ENCODE measurements at regions of chrX and their contacts with region 1.

Region 1: DNA sequence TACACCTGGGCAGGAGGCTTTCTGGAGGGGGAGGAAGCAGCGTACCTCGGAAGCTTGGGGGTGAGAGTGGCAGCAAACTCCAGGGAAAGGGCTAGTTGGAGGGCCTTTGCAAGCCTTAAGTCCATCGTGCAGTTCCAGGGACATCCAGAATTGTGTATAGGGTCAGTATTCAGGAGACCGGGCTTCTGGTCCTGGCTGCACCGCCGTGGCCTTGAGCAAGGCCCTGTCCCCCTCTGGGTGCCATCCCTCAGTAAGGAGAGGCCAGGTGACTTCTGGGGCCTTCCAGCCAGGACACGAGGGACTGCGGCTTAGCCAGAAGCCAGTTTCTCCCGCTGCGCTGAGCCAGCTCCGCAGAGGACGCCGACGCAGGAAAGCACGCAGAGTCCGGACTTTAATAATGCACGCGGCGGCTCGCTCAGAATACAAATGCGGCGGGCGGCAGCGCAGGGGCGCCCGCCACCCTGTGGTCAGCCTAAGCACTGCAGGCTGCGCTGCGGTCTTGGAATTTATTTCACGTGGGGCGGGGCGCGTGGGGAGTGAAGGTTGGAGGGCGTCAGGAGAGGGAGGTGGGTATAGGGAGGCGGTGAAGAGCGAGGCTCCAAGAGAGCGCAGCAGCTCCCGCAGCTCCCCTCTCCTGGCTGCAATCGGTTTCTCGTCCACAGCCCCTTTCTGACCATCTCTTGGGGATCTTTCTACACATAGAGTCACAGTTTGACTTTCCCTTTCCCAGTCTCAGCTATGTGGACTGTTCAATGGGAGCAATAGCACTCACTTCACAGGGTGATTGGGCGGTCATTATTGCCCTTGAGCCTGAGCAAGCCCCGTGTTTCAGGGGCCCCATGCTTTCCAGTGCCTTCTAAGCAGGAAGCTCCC is 94.1 kb upstream of the GPR50 start:
- DNase-seq: peak in 34 of 35 experiments; percentile 1 to 63 (median 38)
- ATAC-seq: peak; percentile 72 to 90 (median 81)
- H3K4me3 ChIP-seq: peak overlapping the region in 1 of 2 donors; percentile 32
- H3K4me3 Mint-ChIP-seq: peak overlapping the region in 1 of 3 donors; percentile 53
- H3K27ac ChIP-seq: no peak overlapping the region
- H3K27ac Mint-ChIP-seq: no peak overlapping the region
- H3K4me1 ChIP-seq: peaks cover 0 to 8% of the 10 kb centered on the region in 2 experiments
- H3K4me1 Mint-ChIP-seq: peaks cover 2 to 5% (median 3%) of the 10 kb centered on the region in 3 donors
- H3K27me3 ChIP-seq: peaks cover 0 to 19% of the 10 kb centered on the region in 2 experiments
- H3K27me3 Mint-ChIP-seq: peaks cover 25 to 26% of the 10 kb centered on the region in 2 donors

Region 2: DNA sequence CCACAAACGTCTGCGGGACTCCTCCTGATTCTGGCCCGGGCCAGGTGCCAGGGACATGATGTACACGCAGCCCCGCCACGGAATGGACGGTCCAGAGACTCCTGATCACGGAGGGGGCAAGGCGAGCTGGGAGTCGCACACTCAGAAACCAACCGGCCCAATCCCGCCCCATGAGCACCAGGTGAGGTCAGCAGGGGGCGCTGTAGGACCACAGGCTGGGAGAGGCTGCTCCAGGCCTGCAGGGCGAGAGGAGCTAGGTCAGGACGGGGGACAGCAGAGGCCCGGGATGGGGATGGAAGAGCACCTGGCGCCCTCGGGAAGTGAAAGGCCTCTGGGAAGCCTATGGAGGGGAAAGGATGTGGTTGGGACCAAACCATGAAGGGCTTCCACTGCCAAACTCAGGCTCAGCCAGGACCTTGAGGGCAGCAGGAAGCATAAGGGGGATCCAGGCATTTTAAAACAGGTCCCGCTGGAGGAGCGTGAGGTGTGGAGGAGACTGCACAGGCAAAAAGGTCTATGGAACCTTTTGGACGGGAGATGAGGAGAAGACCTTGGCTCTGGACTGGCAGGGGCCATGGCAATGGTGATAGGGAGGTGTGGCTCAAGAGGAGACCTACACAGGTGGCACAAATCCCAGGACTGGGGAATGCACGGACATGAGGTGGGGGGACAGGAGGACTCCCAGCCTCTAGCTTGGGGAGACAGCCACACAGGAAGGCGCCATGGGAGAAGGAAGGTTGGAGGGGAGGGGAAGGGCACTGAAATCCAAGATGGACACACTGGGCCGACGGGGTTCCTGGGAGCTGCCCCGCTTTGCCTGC is 310.0 kb before region 1 on chrX:
- CTCF ChIA-PET with region 1: interaction called, 17 to 23 read pairs
- POLR2A ChIA-PET with region 1: no interaction called
- DNase-seq: peak in 33 of 35 experiments; percentile 32 to 75 (median 60)
- ATAC-seq: peak; percentile 67 to 76 (median 70)
- H3K4me3 ChIP-seq: no peak overlapping the region
- H3K4me3 Mint-ChIP-seq: no peak overlapping the region
- H3K27ac ChIP-seq: no peak overlapping the region
- H3K27ac Mint-ChIP-seq: no peak overlapping the region
- H3K4me1 ChIP-seq: peaks cover 0 to 4% of the 10 kb centered on the region in 2 experiments
- H3K4me1 Mint-ChIP-seq: peaks cover 0 to 5% (median 0%) of the 10 kb centered on the region in 3 donors
- H3K27me3 ChIP-seq: no peaks in the 10 kb centered on the region
- H3K27me3 Mint-ChIP-seq: no peaks in the 10 kb centered on the region

Measured in T-cell (primary cell).